Tibial artery (tissue), 4 donors: ENCODE measurements at regions of chr5 and their contacts with region 1.

Region 1: GRCh38 chr5:81751009-81751835 is at the start of gene SSBP2:
- DNase-seq: peak; percentile 99 to 100
- H3K4me3 ChIP-seq: peak within 1 kb of the TSS; percentile 94 to 99
- H3K27ac ChIP-seq: peak within 1 kb of the TSS; percentile 98 to 99
- H3K4me1 ChIP-seq: peaks cover 0 to 78% (median 48%) of the 10 kb centered on the region in 4 donors
- H3K27me3 ChIP-seq: no peaks in the 10 kb centered on the region
- CTCF ChIP-seq: no peak

Region 2: GRCh38 chr5:81425569-81425968 is 325.7 kb before region 1 on chr5:
- intact Hi-C with region 1: loop called (anchors 10 kb)
- DNase-seq: no peak
- H3K4me3 ChIP-seq: no peak overlapping the region
- H3K27ac ChIP-seq: peak overlapping the region; percentile 37 to 46
- H3K4me1 ChIP-seq: peaks cover 0 to 23% (median 7%) of the 10 kb centered on the region in 4 donors
- H3K27me3 ChIP-seq: no peaks in the 10 kb centered on the region
- CTCF ChIP-seq: peak; percentile 61 to 70

Region 3: DNA sequence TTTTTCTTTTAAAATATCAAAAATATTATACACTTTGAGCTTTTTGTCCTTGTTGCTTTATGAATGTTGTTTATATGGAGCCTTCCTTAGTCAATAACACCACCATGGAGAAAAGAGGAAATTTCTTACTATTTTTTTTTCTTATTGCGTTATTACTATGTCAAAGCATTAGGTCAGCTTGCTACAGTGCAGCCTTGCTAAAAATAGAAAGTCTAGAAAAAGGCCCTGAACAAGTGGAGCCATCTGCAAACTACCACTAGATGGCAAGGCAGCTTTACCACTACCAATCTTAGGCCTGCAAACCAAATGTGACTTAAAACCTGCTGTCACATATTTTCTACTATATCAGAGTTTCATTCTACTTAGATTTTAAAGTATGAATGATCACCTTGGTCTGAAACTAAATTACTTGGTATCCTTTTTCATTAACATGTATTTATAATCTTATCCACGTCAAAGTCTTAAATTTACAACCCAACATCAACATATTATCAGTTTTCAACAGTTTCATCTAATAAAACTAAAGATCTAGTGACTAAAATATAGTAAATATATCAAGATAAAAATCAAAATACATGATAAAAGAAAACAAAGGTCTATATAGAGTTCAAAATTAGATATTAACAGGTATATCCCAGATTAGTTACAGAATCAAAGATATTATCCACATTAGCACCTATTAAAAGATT is 244.2 kb before region 1 on chr5:
- intact Hi-C with region 1: loop called (anchors 2 kb)
- DNase-seq: peak; percentile 71 to 76
- H3K4me3 ChIP-seq: no peak overlapping the region
- H3K27ac ChIP-seq: peak overlapping the region; percentile 41 to 51
- H3K4me1 ChIP-seq: peaks cover 0 to 23% (median 4%) of the 10 kb centered on the region in 4 donors
- H3K27me3 ChIP-seq: no peaks in the 10 kb centered on the region
- CTCF ChIP-seq: peak; percentile 83 to 91

Region 4: GRCh38 chr5:81787474-81788242 is 36.4 kb after region 1 on chr5:
- intact Hi-C with region 1: loop called (anchors 5 kb)
- DNase-seq: peak; percentile 78 to 88
- H3K4me3 ChIP-seq: no peak overlapping the region
- H3K27ac ChIP-seq: peak overlapping the region; percentile 41 to 53
- H3K4me1 ChIP-seq: peaks cover 0 to 35% (median 24%) of the 10 kb centered on the region in 4 donors
- H3K27me3 ChIP-seq: no peaks in the 10 kb centered on the region
- CTCF ChIP-seq: no peak

Region 5: GRCh38 chr5:81971712-81972495 is 220.7 kb after region 1 on chr5 and contains the start of gene ATG10:
- intact Hi-C with region 1: loop called (anchors 10 kb)
- DNase-seq: peak; percentile 87 to 95
- H3K4me3 ChIP-seq: peak within 1 kb of the TSS; percentile 65 to 77
- H3K27ac ChIP-seq: peak within 1 kb of the TSS; percentile 97 to 98
- H3K4me1 ChIP-seq: peaks cover 0 to 10% (median 5%) of the 10 kb centered on the region in 4 donors
- H3K27me3 ChIP-seq: no peaks in the 10 kb centered on the region
- CTCF ChIP-seq: no peak